Dendritic cell treated with granulocyte-macrophage colony-stimulating factor and Interleukin-4, amounts not matched to agents 40 ng/mL and 50 ng/mL, for 4 days (primary cell): ENCODE measurements at regions of chr10 and their contacts with region 1.

Region 1: GRCh38 chr10:68406815-68407548 is at the start of gene RUFY2:
- H3K4me3 Mint-ChIP-seq: peak within 1 kb of the TSS; percentile 96
- H3K27ac Mint-ChIP-seq: peak within 1 kb of the TSS; percentile 95
- H3K4me1 Mint-ChIP-seq: peaks cover 20% of the 10 kb centered on the region
- H3K27me3 Mint-ChIP-seq: peaks cover 1% of the 10 kb centered on the region

Region 2: DNA sequence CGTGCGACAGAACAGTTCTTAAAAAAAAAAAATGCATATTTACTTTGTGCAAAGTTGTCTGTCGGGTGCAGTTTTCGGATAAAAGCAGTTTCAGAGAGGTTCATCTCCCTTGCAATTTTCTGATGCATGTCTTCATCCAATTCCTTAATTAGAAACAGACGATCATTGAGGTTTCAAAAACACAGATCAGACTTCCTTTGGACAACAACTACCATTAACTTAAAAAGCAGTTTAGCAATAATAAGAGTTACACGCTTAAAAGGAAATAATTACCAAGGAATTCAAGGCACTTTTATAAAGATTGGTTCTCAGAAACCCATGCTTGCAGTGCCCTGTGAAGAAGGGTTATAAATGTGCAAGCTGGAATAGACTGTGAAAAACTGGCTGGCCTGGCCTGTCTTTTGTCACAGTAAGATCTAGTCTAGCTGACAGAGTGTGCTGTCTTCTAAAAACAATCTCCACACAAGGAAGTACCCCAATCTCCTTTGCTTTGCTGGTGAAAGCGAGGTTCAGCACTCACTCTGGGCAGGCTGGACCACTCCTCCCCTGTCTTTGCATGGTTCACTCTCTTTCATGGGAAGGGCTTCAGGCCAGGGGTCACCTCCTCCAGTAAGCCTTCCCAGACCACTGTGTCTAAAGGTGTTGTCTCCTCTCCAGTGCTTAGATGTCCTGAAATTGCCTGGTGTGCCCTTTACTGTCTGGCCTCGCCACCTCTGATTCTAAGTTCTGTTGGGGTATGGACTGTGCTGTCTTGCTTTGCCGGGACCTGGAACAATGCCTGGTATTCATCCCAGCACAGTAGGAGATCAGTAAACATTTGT is 109.9 kb before region 1 on chr10:
- intact Hi-C with region 1: no loop called
- H3K4me3 Mint-ChIP-seq: no peak overlapping the region
- H3K27ac Mint-ChIP-seq: no peak overlapping the region
- H3K4me1 Mint-ChIP-seq: peaks cover 24% of the 10 kb centered on the region
- H3K27me3 Mint-ChIP-seq: no peaks in the 10 kb centered on the region

Region 3: GRCh38 chr10:68331455-68332258 is 75.3 kb before region 1 on chr10 and contains the start of gene HNRNPH3:
- intact Hi-C with region 1: loop called (anchors 5 kb)
- H3K4me3 Mint-ChIP-seq: peak within 1 kb of the TSS; percentile 99
- H3K27ac Mint-ChIP-seq: peak within 1 kb of the TSS; percentile 100
- H3K4me1 Mint-ChIP-seq: peaks cover 66% of the 10 kb centered on the region
- H3K27me3 Mint-ChIP-seq: no peaks in the 10 kb centered on the region

Region 4: DNA sequence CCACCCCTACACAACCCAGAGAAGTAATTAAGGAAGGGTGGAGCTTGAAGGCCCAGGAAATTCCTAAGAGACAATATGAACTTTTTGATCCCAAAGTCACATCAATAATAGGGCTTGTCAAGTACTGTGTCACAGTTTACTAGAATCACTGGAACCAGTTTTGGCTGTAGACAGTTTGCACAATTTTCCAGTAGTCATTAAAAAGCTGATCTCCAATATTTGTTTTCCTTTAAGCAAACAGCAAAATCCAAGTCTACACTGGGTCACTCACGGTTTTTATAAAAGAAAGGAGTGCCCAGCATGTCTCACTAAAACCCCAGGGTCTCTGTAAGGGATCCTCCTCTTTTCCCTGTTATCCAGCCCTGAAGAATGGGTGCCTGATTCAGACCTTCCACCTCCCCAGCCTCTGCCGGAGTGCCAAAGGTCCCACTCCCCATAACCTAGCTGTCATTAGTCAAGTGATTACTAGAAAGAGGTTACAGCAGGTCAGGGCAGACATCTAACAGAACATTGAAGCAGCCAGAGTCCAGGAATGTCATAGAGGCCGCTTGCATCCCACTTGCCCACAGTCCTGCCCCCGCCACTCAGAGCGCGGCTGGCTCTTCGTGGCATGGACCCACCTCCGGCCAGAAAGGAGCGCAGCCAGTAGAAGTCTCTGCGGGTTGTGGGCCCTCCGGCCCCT is 119.8 kb after region 1 on chr10:
- intact Hi-C with region 1: loop called (anchors 5 kb)
- H3K4me3 Mint-ChIP-seq: peak overlapping the region; percentile 85
- H3K27ac Mint-ChIP-seq: peak overlapping the region; percentile 87
- H3K4me1 Mint-ChIP-seq: peaks cover 20% of the 10 kb centered on the region
- H3K27me3 Mint-ChIP-seq: no peaks in the 10 kb centered on the region